ENCODE measurements at regions of chr17 and their contacts with region 1.

Region 1: DNA sequence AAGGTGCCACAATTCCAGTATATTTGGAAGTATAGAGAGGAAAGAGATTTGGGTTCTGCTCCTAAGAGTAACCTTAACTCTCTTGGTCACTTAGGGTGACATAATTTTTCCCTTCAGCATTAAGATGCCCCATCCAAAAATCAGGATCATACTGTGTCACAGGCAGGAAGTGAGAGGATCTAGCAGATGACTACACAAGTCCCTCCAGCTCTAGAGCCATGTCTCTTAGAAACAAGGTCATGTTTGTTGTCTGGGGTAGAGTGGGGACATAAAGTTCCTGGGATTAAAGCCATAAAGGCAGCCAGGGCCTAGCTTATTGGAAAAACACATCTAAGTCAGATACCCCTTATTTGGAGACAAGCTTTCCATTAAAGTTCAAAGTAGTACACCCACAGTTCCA is 2.7 kb downstream of the CCL8 start:
- DNase-seq: no peak
- H3K4me3 ChIP-seq: no peak overlapping the region
- CTCF ChIP-seq: no peak

Region 2: DNA sequence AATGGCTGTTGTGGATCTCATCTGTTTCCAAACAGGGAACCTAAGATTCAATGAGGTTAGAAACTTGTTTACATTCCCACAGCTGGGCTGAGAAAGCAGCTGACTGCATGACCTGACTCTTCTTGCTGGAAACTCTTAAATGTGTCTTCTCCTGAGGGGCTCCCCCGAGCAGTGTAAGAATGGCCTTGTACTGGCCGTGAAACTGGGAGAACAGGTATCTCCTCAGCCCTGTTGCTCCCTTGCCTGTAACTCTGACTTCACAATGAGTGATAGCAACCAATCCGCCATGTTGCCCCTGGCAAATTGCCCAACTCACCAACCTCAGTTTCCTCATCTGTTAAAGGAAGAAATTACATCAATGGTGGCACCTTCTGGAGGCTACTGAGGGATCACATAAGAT is 126.0 kb before region 1 on chr17:
- in situ Hi-C with region 1: no loop called
- DNase-seq: no peak
- H3K4me3 ChIP-seq: no peak overlapping the region
- CTCF ChIP-seq: no peak

Region 3: DNA sequence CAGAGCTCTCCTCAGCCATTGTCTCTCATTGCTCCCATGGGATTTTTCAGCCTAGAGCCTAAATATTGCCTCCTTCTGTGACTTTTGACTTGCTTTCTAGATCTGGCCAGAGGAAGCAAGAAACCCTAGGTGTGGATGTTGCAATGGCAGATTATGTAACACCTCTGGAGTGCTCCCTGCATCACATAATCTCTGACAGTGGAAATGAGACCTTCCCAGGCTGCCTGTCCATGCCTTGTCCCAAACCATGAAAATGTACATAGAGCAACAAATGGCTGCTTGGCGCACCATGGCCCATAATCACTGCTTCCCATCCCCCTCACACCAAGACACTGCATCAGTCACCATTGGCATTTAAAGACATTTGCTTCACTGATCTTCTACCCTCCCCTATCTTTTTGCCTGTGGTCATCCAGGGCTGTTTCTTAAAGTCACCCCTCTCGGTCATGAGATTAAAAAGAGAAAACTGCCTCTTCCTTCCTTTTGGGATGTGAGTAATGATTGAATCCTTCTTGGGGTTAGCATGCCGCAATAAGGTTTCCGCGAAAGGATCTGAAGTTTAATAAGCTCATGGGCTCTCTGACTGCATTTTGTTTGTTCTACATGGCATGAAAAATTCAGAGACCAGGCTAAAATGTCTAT is 101.1 kb before region 1 on chr17:
- in situ Hi-C with region 1: no loop called
- DNase-seq: no peak
- H3K4me3 ChIP-seq: no peak overlapping the region
- CTCF ChIP-seq: no peak

Region 4: GRCh38 chr17:34401165-34401564 is 79.2 kb after region 1 on chr17:
- in situ Hi-C with region 1: loop called (anchors 10 kb)
- DNase-seq: no peak
- H3K4me3 ChIP-seq: no peak overlapping the region
- CTCF ChIP-seq: no peak